CD8-positive, alpha-beta T cell (primary cell): ENCODE measurements at regions of chr3 and their contacts with region 1.

Region 1: DNA sequence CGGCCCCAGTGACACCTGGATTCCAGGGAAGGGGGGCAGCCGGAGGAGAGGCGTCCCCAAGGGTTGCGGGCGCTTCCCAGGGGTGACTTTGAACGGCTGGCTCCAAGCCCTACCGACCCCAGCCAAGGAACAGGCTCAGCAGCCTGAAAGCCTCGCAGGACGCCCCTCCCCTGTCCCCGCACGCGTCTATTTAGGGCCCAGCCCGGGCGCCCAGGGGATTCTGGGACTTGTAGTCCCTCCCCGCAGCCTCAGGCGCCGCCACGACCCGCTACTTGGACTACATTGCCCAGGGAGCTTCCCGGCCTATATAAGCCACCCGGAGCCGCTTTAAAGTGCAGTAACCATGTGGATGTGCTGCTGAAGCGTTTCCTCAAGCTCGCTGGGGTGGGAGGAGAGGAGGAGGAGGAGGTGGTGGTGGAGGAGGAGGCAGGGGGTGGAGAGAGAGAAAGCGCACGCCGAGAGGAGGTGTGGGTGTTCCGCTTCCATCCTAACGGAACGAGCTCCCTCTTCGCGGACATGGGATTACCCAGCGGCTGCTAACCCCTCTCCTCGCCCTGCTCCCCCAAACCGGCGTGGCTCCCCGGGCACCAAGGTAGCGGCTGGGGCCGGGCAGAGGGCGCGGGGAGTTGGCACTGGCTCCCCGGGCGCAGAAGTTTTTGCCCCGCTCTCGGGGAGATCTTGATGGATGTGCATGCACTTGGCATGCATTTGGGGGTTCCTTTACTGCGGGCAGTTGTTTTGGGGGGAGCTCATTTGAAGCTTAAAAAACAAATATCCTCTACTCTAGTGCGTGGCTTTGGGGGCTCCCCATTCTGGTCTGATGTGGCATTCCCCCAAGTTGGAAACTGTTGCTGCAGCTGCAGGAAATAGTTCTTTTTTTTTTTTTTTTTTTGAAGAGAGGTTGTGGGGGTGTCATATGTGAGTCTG is at the start of gene ITPR1:
- DNase-seq: peak; percentile 96 to 99 (median 98)
- ATAC-seq: peak; percentile 84
- H3K4me3 ChIP-seq: peak within 1 kb of the TSS; percentile 94 to 97
- H3K4me3 Mint-ChIP-seq: peak within 1 kb of the TSS; percentile 93
- H3K27ac ChIP-seq: peak within 1 kb of the TSS; percentile 70 to 75
- H3K27ac Mint-ChIP-seq: peak within 1 kb of the TSS; percentile 87
- H3K4me1 ChIP-seq: peaks cover 24% of the 10 kb centered on the region
- H3K4me1 Mint-ChIP-seq: peaks cover 48% of the 10 kb centered on the region
- H3K27me3 ChIP-seq: no peaks in the 10 kb centered on the region
- H3K27me3 Mint-ChIP-seq: no peaks in the 10 kb centered on the region
- CTCF ChIP-seq: no peak
- total RNA-seq, gene ITPR1: 57.5 to 62.3 TPM

Region 2: GRCh38 chr3:3179407-3180094 is 1313.7 kb before region 1 on chr3 and contains the start of gene CRBN:
- CTCF ChIA-PET with region 1: no interaction called
- POLR2A ChIA-PET with region 1: no interaction called
- intact Hi-C with region 1: loop called (anchors 10 kb)
- DNase-seq: peak; percentile 80 to 94 (median 88)
- ATAC-seq: peak; percentile 96
- H3K4me3 ChIP-seq: peak within 1 kb of the TSS; percentile 70 to 87
- H3K4me3 Mint-ChIP-seq: peak within 1 kb of the TSS; percentile 89
- H3K27ac ChIP-seq: peak within 1 kb of the TSS; percentile 77 to 80
- H3K27ac Mint-ChIP-seq: peak within 1 kb of the TSS; percentile 91
- H3K4me1 ChIP-seq: peaks cover 47% of the 10 kb centered on the region
- H3K4me1 Mint-ChIP-seq: peaks cover 43% of the 10 kb centered on the region
- H3K27me3 ChIP-seq: no peaks in the 10 kb centered on the region
- H3K27me3 Mint-ChIP-seq: no peaks in the 10 kb centered on the region
- CTCF ChIP-seq: peak; percentile 90
- total RNA-seq, gene CRBN: 143 to 144 TPM

Region 3: DNA sequence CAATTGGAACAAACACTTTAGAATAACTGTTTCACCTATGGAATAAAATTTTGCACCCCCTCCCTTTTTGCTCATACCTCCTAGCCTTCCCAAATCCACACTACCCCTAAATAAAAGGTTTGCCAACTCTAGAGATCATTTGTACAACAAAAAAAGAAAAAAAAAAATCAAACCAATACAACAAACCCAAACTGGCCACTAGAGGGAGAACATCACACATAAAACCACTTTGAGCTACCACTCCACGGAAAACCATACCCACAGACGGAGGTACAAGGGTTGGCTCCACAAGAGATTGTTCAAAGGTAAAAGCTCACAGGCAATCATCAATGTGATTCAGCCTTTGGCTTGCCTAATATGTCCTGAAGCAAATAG is 142.5 kb before region 1 on chr3:
- CTCF ChIA-PET with region 1: no interaction called
- POLR2A ChIA-PET with region 1: interaction called, 9 read pairs
- intact Hi-C with region 1: loop called in 1 of 2 experiments (anchors 5 kb)
- DNase-seq: peak in 8 of 9 experiments; percentile 27 to 87 (median 50)
- ATAC-seq: peak; percentile 86
- H3K4me3 ChIP-seq: peak overlapping the region; percentile 6 to 49
- H3K4me3 Mint-ChIP-seq: peak overlapping the region; percentile 77
- H3K27ac ChIP-seq: peak overlapping the region; percentile 63
- H3K27ac Mint-ChIP-seq: peak overlapping the region; percentile 25
- H3K4me1 ChIP-seq: no peaks in the 10 kb centered on the region
- H3K4me1 Mint-ChIP-seq: peaks cover 15% of the 10 kb centered on the region
- H3K27me3 ChIP-seq: no peaks in the 10 kb centered on the region
- H3K27me3 Mint-ChIP-seq: no peaks in the 10 kb centered on the region
- CTCF ChIP-seq: peak; percentile 82

Region 4: DNA sequence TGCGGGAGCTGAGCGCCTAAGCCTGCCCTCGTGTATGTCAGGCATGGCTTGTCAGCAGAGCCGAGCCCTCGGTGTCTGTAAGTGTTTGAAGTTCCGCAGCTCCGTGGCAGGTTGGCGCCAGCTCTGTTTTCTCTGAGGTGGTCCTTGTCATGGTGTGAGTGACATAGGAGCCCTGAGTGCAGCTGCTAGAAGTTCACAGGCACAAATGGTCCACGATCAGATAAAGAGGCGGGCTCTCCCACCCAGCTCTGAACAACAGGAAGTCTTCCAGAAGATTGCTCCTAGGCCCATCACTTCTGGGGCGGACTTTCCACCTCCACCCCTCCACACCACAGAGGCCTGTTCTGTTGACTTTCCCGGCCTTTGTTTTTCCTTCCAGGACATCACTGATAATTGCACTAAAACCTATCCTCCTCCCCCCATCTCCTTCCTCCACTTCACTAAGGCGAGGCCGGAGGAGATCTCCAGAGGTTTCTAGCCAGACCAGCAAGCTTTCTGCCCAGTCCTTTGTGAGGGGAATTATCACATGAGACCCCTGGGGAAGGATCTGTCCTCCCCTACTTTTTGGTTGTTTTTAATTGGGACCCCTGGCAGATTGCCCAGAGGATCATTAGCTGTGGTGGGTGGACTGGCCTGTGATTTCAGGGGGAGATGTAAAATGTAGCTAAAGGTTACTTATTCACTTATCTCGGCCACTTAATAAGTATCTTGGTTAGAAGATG is 19.8 kb after region 1 on chr3:
- CTCF ChIA-PET with region 1: interaction called, 22 read pairs
- POLR2A ChIA-PET with region 1: interaction called, 67 read pairs
- intact Hi-C with region 1: loop called in 1 of 2 experiments (anchors 2 kb)
- DNase-seq: peak in 1 of 9 experiments; percentile 27
- ATAC-seq: peak; percentile 62
- H3K4me3 ChIP-seq: no peak overlapping the region
- H3K4me3 Mint-ChIP-seq: no peak overlapping the region
- H3K27ac ChIP-seq: no peak overlapping the region
- H3K27ac Mint-ChIP-seq: peak overlapping the region; percentile 14
- H3K4me1 ChIP-seq: peaks cover 24% of the 10 kb centered on the region
- H3K4me1 Mint-ChIP-seq: peaks cover 56% of the 10 kb centered on the region
- H3K27me3 ChIP-seq: no peaks in the 10 kb centered on the region
- H3K27me3 Mint-ChIP-seq: no peaks in the 10 kb centered on the region
- CTCF ChIP-seq: no peak

Region 5: GRCh38 chr3:4633078-4634004 is 140.1 kb after region 1 on chr3:
- CTCF ChIA-PET with region 1: interaction called, 14 read pairs
- POLR2A ChIA-PET with region 1: interaction called, 6 read pairs
- intact Hi-C with region 1: no loop called
- DNase-seq: peak in 2 of 9 experiments; percentile 63 to 71
- ATAC-seq: peak; percentile 63
- H3K4me3 ChIP-seq: no peak overlapping the region
- H3K4me3 Mint-ChIP-seq: no peak overlapping the region
- H3K27ac ChIP-seq: no peak overlapping the region
- H3K27ac Mint-ChIP-seq: no peak overlapping the region
- H3K4me1 ChIP-seq: no peaks in the 10 kb centered on the region
- H3K4me1 Mint-ChIP-seq: peaks cover 2% of the 10 kb centered on the region
- H3K27me3 ChIP-seq: no peaks in the 10 kb centered on the region
- H3K27me3 Mint-ChIP-seq: no peaks in the 10 kb centered on the region
- CTCF ChIP-seq: peak; percentile 78

Region 6: GRCh38 chr3:5122030-5122740 is 628.9 kb after region 1 on chr3 and contains the start of gene ARL8B:
- CTCF ChIA-PET with region 1: interaction called, 3 read pairs
- POLR2A ChIA-PET with region 1: no interaction called
- intact Hi-C with region 1: loop called (anchors 1 to 10 kb)
- DNase-seq: peak; percentile 80 to 95 (median 91)
- ATAC-seq: peak; percentile 98
- H3K4me3 ChIP-seq: peak within 1 kb of the TSS; percentile 91 to 98
- H3K4me3 Mint-ChIP-seq: peak within 1 kb of the TSS; percentile 81
- H3K27ac ChIP-seq: peak within 1 kb of the TSS; percentile 87 to 92
- H3K27ac Mint-ChIP-seq: peak within 1 kb of the TSS; percentile 81
- H3K4me1 ChIP-seq: peaks cover 31% of the 10 kb centered on the region
- H3K4me1 Mint-ChIP-seq: peaks cover 38% of the 10 kb centered on the region
- H3K27me3 ChIP-seq: no peaks in the 10 kb centered on the region
- H3K27me3 Mint-ChIP-seq: no peaks in the 10 kb centered on the region
- CTCF ChIP-seq: peak; percentile 92
- total RNA-seq, gene ARL8B: 54.1 to 61.7 TPM